ENCODE measurements at regions of chr14 and their contacts with region 1.

Region 1: DNA sequence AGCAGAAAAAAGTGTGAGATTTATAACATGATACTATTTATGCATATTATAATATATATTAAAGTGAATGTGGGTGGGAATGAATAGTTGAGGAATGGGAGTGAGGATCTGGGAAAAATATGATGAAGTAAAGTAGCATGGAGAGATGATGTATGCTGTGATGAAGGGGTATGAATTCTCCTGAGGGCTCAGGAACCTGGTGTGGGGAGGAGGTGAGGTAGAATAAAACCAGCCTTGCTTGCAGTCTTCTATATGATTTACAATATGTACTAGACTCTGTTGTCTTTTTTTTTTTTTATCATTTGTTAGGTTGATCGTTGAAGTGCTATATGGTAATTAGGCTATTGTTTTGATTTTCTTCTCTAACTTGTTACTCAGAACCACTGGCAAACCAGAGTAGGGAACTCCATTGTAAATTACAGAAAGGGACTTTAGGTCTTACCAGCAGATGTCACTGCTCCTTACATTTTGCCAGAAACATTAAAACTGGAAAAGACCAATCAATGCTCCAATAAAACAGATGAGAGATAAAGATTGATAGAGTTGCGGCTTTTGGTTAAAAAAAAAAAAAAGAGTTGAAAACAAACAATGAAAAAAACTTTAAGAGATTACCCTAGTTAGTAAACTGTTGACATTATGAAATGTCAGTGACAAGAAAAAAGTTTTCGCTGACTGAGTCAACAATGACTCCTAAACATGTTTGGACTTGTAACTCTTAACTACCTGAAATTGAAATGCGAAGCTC is 39.9 kb downstream of the ATL1 start:
- DNase-seq: peak in 2 of 9 experiments; percentile 30 to 51
- ATAC-seq: peak; percentile 23
- H3K4me3 ChIP-seq: no peak overlapping the region
- H3K4me3 Mint-ChIP-seq: no peak overlapping the region
- H3K27ac ChIP-seq: no peak overlapping the region
- H3K27ac Mint-ChIP-seq: no peak overlapping the region
- H3K4me1 ChIP-seq: no peaks in the 10 kb centered on the region
- H3K4me1 Mint-ChIP-seq: no peaks in the 10 kb centered on the region
- H3K27me3 ChIP-seq: no peaks in the 10 kb centered on the region
- H3K27me3 Mint-ChIP-seq: no peaks in the 10 kb centered on the region
- CTCF ChIP-seq: peak; percentile 34

Region 2: DNA sequence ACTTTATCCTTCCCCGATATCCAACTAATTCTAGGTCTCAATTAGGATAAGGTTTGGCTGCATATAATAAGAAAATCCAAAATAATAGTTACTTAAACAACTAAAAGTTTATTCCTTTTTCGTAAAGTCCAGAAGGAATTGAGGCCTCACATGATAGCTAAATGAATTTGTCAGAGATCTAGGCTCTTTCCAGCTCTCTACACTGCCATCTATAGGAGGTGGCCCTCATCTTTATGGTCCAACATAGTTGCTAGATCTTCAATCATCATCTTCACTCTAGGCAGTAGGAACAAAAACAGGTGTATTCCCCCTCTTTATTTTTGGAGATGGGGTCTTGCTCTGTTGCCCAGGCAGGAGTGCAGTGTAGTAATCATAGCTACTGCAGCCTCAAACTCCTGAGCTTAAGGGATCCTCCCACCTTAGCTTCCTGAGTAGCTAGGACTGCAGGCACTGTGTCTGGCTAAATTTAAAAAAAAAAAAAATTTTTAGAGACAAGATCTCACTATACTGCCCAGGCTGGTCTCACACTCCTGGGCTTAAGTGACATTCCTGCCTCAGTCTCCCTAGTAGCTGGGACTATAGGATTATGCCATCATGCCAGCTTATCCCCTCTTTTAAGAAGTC is 114.7 kb after region 1 on chr14:
- CTCF ChIA-PET with region 1: no interaction called
- POLR2A ChIA-PET with region 1: no interaction called
- intact Hi-C with region 1: loop called in 1 of 2 experiments (anchors 10 kb)
- DNase-seq: peak in 2 of 9 experiments; percentile 30 to 43
- ATAC-seq: no peak
- H3K4me3 ChIP-seq: no peak overlapping the region
- H3K4me3 Mint-ChIP-seq: no peak overlapping the region
- H3K27ac ChIP-seq: no peak overlapping the region
- H3K27ac Mint-ChIP-seq: no peak overlapping the region
- H3K4me1 ChIP-seq: no peaks in the 10 kb centered on the region
- H3K4me1 Mint-ChIP-seq: no peaks in the 10 kb centered on the region
- H3K27me3 ChIP-seq: no peaks in the 10 kb centered on the region
- H3K27me3 Mint-ChIP-seq: peaks cover 8% of the 10 kb centered on the region
- CTCF ChIP-seq: peak; percentile 40

Region 3: DNA sequence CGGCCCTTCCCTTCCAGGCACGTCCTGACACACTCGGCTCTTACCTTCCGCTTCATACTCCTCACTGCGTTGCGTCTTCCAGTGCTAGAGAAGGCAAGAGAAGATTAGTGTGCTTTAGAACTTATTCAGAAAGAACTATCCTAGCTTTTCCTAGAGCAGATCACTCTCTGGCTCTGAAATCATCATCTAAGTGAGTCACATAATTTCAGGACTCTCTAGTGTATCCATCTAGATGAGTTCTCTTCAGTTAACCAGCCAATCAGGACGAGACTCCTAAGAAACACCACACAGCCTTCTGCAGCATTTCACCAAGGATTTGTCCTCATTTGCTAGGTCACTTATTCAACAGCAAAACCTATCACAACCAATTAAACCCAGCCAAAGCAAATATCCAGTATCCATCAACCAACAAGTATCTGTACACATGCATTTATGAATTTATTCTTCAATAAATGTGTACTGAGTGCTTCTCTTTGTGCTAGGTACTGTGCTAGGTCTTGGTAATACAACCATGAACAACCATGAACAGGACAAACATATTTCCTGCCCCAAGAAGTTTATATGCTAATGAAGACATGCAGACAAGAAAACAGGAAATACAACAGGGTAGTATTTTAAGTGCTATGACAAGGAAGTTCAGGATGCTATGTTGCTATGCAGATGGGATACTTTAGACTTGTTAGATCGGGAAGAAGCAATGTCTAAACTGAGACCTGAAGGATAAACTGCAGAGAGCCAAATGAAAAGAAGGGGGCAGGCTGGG is 179.0 kb after region 1 on chr14:
- CTCF ChIA-PET with region 1: interaction called, 6 read pairs
- POLR2A ChIA-PET with region 1: no interaction called
- intact Hi-C with region 1: loop called (anchors 2 kb)
- DNase-seq: peak in 1 of 9 experiments; percentile 28
- ATAC-seq: peak; percentile 27
- H3K4me3 ChIP-seq: no peak overlapping the region
- H3K4me3 Mint-ChIP-seq: no peak overlapping the region
- H3K27ac ChIP-seq: peak overlapping the region in 1 of 2 experiments; percentile 17
- H3K27ac Mint-ChIP-seq: peak overlapping the region; percentile 80
- H3K4me1 ChIP-seq: peaks cover 57% of the 10 kb centered on the region
- H3K4me1 Mint-ChIP-seq: peaks cover 68% of the 10 kb centered on the region
- H3K27me3 ChIP-seq: no peaks in the 10 kb centered on the region
- H3K27me3 Mint-ChIP-seq: no peaks in the 10 kb centered on the region
- CTCF ChIP-seq: no peak

Region 4: DNA sequence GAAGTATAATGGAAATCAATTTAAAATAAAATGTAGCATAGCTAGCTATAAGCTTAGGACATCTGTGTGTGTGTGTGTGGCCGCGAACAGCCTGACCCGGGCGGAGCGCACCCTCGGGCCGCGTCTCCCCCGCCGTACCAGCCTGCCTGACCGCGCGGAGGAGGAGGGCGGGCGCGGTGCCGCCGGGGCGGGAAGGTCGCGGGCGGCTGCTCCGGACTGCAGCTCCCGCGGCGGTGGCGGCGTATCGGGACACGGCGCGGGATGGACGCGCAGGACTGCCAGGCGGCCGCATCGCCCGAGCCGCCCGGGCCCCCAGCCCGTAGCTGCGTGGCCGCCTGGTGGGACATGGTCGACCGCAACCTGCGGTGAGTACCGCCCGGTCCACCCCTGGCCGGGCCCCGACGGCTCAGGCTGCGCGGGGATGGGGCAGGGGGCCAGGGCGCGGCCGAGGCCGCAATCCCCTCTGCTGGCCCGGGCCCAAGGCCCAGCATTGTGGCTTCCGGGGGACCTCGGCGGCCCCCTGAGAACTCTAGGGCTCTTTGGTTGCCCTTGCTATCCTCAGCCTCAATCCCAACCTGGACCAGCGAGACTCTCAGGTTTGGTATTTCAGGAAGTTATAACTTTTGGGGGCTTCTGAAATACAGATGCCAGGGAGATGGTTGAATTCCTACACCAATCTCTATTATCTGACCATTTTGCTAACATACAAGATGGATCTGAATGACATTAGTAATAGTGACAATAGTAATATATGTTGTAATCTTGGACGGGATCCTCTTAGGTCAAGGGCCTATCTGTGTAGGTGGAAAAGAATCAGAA is 272.3 kb after region 1 on chr14 and contains the start of gene ABHD12B:
- CTCF ChIA-PET with region 1: interaction called, 13 read pairs
- POLR2A ChIA-PET with region 1: no interaction called
- intact Hi-C with region 1: no loop called
- DNase-seq: no peak
- ATAC-seq: no peak
- H3K4me3 ChIP-seq: no peak within 1 kb of the TSS
- H3K4me3 Mint-ChIP-seq: peak within 1 kb of the TSS; percentile 30
- H3K27ac ChIP-seq: no peak within 1 kb of the TSS
- H3K27ac Mint-ChIP-seq: no peak within 1 kb of the TSS
- H3K4me1 ChIP-seq: peaks cover 17% of the 10 kb centered on the region
- H3K4me1 Mint-ChIP-seq: peaks cover 41% of the 10 kb centered on the region
- H3K27me3 ChIP-seq: peaks cover 21 to 22% of the 10 kb centered on the region in 2 experiments
- H3K27me3 Mint-ChIP-seq: peaks cover 50% of the 10 kb centered on the region
- CTCF ChIP-seq: no peak
- total RNA-seq, gene ABHD12B: not detected